Aorta (tissue), 5 donors: ENCODE measurements at regions of chr17 and their contacts with region 1.

Region 1: GRCh38 chr17:31510308-31511194 is 119.1 kb downstream of the RAB11FIP4 start:
- DNase-seq: peak; percentile 66 to 85
- ATAC-seq: peak; percentile 42
- H3K4me3 ChIP-seq: no peak overlapping the region
- H3K27ac ChIP-seq: no peak overlapping the region
- H3K4me1 ChIP-seq: peaks cover 0 to 4% of the 10 kb centered on the region in 2 donors
- H3K27me3 ChIP-seq: no peaks in the 10 kb centered on the region

Region 2: DNA sequence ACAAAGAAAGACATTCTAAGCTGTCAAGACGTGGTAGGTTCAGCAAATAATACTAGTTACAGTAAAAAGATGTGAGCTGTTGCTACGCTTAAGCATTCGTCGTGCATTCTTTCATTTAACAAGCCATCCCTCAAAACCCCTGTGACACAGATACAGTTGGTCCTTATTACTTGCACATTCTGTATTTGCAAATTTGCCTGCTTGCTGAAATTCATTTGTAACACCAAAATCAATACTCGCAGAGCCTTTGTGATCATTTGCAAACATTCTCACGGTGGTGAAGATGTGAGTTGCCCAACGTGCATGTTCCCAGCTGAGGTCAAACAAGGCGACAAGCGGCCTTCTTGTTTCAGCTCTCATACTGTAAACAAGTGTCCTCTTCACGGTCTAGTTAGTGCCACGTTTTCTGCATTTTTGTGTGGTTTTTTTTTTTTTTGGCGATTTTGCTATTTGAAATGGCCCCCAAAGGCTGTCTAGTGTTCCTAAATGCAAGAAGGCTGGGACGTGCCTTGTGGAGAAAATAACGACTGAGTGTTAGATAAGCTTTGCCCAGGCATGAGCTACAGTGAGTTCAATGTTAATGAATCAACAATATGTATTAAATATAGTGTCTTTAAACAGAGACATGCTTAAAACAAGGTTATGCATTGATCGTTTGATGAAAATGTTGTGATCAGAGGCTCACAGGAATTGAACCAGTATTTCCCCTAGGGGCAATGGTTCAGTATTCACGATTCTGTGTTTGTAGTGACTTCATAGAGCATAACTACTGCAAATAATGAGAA is 35.0 kb before region 1 on chr17:
- intact Hi-C with region 1: loop called in 1 of 2 experiments (anchors 5 kb)
- DNase-seq: no peak
- ATAC-seq: no peak
- H3K4me3 ChIP-seq: no peak overlapping the region
- H3K27ac ChIP-seq: no peak overlapping the region
- H3K4me1 ChIP-seq: no peaks in the 10 kb centered on the region
- H3K27me3 ChIP-seq: no peaks in the 10 kb centered on the region

Region 3: GRCh38 chr17:31582151-31582907 is 71.8 kb after region 1 on chr17:
- intact Hi-C with region 1: no loop called
- DNase-seq: peak; percentile 88 to 92
- ATAC-seq: peak; percentile 75
- H3K4me3 ChIP-seq: no peak overlapping the region
- H3K27ac ChIP-seq: peak overlapping the region; percentile 50 to 79
- H3K4me1 ChIP-seq: peaks cover 0 to 4% of the 10 kb centered on the region in 2 donors
- H3K27me3 ChIP-seq: no peaks in the 10 kb centered on the region